Activated CD8-positive, alpha-beta T cell treated with anti-CD3 and anti-CD28 coated beads, Interleukin-2, amount 10 ng/mL, durations not matched to agents 7 days and 5 days (primary cell): ENCODE measurements at regions of chr22 and their contacts with region 1.

Region 1: GRCh38 chr22:41746567-41747400 is 47.5 kb downstream of the MEI1 start:
- DNase-seq: peak; percentile 63
- ATAC-seq: peak; percentile 90
- H3K4me3 Mint-ChIP-seq: no peak overlapping the region
- H3K27ac Mint-ChIP-seq: no peak overlapping the region
- H3K4me1 Mint-ChIP-seq: no peaks in the 10 kb centered on the region
- H3K27me3 Mint-ChIP-seq: peaks cover 30% of the 10 kb centered on the region

Region 2: GRCh38 chr22:41768430-41768829 is 21.6 kb after region 1 on chr22:
- CTCF ChIA-PET with region 1: interaction called, 13 read pairs
- POLR2A ChIA-PET with region 1: no interaction called
- DNase-seq: no peak
- ATAC-seq: no peak
- H3K4me3 Mint-ChIP-seq: no peak overlapping the region
- H3K27ac Mint-ChIP-seq: no peak overlapping the region
- H3K4me1 Mint-ChIP-seq: no peaks in the 10 kb centered on the region
- H3K27me3 Mint-ChIP-seq: peaks cover 10% of the 10 kb centered on the region

Region 3: DNA sequence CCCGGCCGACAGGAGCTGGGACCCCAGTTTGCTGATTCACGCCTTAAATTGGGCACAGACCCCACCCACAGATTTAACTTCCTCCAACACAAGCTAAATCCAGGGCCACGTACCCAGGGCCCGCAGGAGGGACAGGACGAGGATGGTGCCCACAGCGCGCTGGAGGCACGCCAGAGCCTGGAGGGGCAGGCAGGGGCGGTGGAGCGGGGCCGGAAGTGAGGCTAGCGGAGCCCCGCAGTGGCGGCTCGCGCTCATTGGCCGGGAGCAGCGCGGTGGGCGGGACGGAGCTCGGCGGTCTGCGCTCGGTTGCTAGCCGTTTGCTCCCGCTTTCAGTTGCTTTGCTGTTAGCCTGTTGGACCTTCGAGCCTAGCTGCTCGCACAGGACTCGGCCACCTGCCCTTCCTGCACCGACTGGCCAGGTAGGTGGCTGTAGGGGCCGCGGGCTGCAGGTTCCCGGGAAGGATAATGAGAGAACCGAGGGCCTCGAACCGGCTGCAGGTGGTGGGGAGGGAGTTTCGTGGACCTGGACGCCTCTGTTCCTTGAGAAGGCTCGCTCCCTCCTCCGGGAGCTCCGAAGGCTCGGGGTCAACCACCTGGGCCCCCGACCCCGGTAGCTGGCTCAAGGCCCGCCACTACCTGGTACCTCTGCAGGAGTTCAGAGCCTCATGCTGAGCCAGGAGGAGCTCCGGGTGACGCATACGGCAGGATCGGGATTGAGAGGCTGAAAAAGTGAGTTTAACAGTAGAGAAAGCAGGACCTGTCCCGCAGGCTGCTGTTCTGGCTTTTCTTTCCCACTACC is 53.8 kb after region 1 on chr22 and contains the start of gene CCDC134:
- CTCF ChIA-PET with region 1: interaction called, 18 read pairs
- POLR2A ChIA-PET with region 1: no interaction called
- DNase-seq: peak; percentile 94
- ATAC-seq: peak; percentile 98
- H3K4me3 Mint-ChIP-seq: peak within 1 kb of the TSS; percentile 98
- H3K27ac Mint-ChIP-seq: peak within 1 kb of the TSS; percentile 99
- H3K4me1 Mint-ChIP-seq: peaks cover 43% of the 10 kb centered on the region
- H3K27me3 Mint-ChIP-seq: no peaks in the 10 kb centered on the region
- total RNA-seq, gene CCDC134: 20.3 to 20.9 TPM

Region 4: GRCh38 chr22:41873391-41873790 is 126.6 kb after region 1 on chr22:
- CTCF ChIA-PET with region 1: interaction called, 10 read pairs
- POLR2A ChIA-PET with region 1: no interaction called
- DNase-seq: peak; percentile 35
- ATAC-seq: peak; percentile 73
- H3K4me3 Mint-ChIP-seq: no peak overlapping the region
- H3K27ac Mint-ChIP-seq: no peak overlapping the region
- H3K4me1 Mint-ChIP-seq: peaks cover 12% of the 10 kb centered on the region
- H3K27me3 Mint-ChIP-seq: no peaks in the 10 kb centered on the region